WTC11 (cell line): ENCODE measurements at regions of chr9 and their contacts with region 1.

Region 1: GRCh38 chr9:34578241-34579103 is 11.1 kb downstream of the CNTFR start:
- DNase-seq: peak; percentile 56
- ATAC-seq: peak; percentile 25
- H3K4me3 Mint-ChIP-seq: peak overlapping the region; percentile 67
- H3K27ac Mint-ChIP-seq: no peak overlapping the region
- H3K4me1 Mint-ChIP-seq: peaks cover 48% of the 10 kb centered on the region
- H3K27me3 Mint-ChIP-seq: peaks cover 73% of the 10 kb centered on the region
- CTCF ChIP-seq: no peak

Region 2: DNA sequence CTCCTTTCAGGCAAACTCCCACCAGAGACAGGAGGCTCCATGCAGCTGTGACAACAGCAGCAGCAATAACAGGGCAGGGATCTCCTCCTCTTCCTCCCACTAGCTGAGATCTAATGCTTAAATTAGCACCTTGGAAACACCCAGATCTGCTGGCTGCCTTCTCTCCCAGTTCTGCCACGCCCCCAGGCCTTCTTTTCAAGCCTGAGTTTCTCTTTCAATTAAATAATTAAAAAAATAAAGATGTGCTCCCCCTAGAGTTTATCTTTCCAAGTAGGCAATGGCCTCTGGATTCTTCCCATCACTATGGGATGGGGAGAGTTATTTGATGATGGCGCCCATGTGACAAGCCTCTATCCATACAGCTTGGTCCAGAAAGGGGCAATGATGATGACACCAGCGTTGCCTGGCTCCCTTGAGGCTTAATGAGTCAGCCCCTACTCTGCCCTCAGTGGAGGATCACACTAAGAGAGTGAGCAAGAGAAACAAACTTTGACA is 123.9 kb before region 1 on chr9:
- CTCF ChIA-PET with region 1: no interaction called
- POLR2A ChIA-PET with region 1: no interaction called
- DNase-seq: no peak
- ATAC-seq: no peak
- H3K4me3 Mint-ChIP-seq: no peak overlapping the region
- H3K27ac Mint-ChIP-seq: no peak overlapping the region
- H3K4me1 Mint-ChIP-seq: peaks cover 32% of the 10 kb centered on the region
- H3K27me3 Mint-ChIP-seq: peaks cover 22% of the 10 kb centered on the region
- CTCF ChIP-seq: no peak

Region 3: DNA sequence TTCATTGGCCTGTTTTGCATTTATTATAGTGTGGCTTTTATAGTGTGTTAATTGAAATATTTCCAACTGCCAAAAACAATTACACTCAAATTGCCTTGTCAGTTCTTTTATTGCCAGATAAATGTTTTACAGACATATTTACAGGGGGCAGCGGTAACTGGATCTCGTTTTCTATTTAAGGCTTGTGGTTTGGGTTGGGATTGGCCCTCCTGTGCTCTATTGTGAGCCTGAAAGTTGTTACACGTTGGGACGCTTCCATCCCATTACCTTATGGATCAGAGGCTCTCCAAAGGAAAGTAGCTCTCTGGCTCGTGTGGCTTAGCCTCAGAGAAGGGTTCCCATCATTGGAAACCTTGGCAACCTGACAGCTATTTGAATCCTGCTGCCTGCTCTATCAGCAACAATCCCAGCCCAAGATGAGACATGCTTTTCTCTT is 99.0 kb before region 1 on chr9:
- CTCF ChIA-PET with region 1: no interaction called
- POLR2A ChIA-PET with region 1: no interaction called
- DNase-seq: no peak
- ATAC-seq: no peak
- H3K4me3 Mint-ChIP-seq: no peak overlapping the region
- H3K27ac Mint-ChIP-seq: no peak overlapping the region
- H3K4me1 Mint-ChIP-seq: no peaks in the 10 kb centered on the region
- H3K27me3 Mint-ChIP-seq: peaks cover 6% of the 10 kb centered on the region; the same call in 1 of the 2 replicates
- CTCF ChIP-seq: no peak

Region 4: DNA sequence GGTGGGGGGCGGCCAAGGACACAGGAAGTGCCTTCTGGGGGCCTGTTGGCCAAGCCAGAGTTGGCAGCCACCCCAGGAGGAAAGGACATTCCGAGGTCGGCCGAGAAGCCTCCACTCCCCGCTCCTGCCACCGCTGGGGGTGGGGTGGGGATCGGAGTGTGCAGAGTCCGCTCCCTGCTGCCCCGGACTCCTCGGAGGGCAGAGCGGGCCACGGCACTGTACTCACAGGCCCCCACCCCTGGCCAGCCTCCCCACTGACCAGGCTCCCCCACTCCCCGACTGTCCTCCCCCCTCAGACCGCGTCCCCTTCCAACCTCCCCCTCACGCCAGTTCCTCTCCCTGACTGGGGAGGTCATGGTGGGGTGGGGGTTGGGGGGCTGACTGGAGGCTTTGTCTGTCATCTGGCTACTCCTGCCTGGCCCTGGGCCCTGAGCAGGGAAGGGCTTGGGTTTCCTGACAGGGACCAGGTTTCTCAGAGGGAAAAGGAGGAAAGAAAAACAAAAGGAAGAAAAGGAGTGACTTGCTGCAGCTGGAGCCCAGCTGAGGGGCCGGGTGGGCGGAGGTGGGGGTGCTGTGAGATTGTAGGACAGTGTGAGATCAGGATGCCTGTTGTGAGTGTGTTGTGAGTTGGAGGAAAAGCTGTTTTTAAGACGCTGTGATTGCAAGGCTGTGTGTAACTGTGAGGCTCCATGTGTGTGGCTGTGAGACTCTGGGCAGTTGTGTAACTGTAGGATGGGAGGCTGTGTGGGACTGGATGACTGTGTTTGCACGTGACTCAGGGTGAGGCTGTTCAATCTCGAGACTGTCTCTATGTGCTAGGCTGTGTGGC is 18.6 kb before region 1 on chr9:
- CTCF ChIA-PET with region 1: interaction called, 37 read pairs
- POLR2A ChIA-PET with region 1: no interaction called
- DNase-seq: no peak
- ATAC-seq: peak; percentile 27
- H3K4me3 Mint-ChIP-seq: no peak overlapping the region
- H3K27ac Mint-ChIP-seq: peak overlapping the region; percentile 33; the same call in 1 of the 2 replicates
- H3K4me1 Mint-ChIP-seq: peaks cover 37% of the 10 kb centered on the region
- H3K27me3 Mint-ChIP-seq: peaks cover 4% of the 10 kb centered on the region
- CTCF ChIP-seq: no peak